Calu3 (cell line): ENCODE measurements at regions of chr20 and their contacts with region 1.

Region 1: DNA sequence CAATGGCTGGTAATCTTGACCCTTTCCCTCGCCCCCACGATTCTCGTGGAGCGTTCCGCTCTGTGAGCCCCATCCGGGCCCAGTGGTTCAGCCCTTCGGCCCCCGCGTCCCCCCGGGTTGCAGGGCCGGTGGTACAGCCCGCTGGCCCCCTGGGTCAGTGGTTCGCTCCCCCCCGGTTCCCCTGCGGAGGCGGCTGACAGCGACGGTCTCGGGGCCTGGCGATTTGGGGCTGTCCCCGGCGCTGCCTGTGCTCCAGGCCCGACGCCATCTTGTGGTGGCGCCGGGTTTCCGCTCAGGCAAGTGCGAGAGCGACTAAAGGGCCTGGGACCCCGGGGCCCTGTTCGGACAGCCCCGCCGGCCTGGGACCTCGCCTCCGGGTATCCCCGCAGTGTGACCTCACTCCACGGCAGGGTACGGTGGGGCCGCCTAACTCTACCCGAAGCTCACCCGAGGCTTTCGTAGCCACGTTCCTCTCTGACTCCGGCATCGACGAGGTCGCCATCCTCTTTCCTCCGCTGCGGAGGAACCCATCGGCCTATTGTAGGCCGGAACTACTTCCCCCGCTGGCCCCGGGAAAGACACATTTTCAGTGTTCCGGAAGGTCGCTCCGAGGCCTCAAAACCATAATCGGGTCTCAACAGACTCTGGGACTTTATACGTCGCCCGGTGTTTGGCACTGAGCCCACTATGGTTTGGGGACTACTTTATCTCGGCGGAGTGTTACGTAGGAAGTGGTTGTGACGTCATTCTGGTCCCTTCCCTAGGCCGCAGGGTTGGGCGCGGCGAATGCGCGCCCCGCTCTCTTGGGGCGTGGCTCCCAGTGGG is at the start of gene ZNF335:
- DNase-seq: peak; percentile 99
- H3K4me3 Mint-ChIP-seq: peak within 1 kb of the TSS; percentile 81
- H3K27ac Mint-ChIP-seq: peak within 1 kb of the TSS; percentile 80
- H3K4me1 Mint-ChIP-seq: peaks cover 24% of the 10 kb centered on the region
- H3K27me3 Mint-ChIP-seq: peaks cover 15% of the 10 kb centered on the region
- CTCF ChIP-seq: peak; percentile 35
- total RNA-seq, gene ZNF335: 26.4 and 31.9 TPM in 2 replicates

Region 2: GRCh38 chr20:46013826-46014516 is 42.1 kb after region 1 on chr20:
- CTCF ChIA-PET with region 1: interaction called, 12 read pairs
- intact Hi-C with region 1: no loop called
- DNase-seq: peak; percentile 87
- H3K4me3 Mint-ChIP-seq: peak overlapping the region; percentile 55
- H3K27ac Mint-ChIP-seq: no peak overlapping the region
- H3K4me1 Mint-ChIP-seq: peaks cover 31% of the 10 kb centered on the region
- H3K27me3 Mint-ChIP-seq: peaks cover 89% of the 10 kb centered on the region
- CTCF ChIP-seq: peak; percentile 92

Region 3: DNA sequence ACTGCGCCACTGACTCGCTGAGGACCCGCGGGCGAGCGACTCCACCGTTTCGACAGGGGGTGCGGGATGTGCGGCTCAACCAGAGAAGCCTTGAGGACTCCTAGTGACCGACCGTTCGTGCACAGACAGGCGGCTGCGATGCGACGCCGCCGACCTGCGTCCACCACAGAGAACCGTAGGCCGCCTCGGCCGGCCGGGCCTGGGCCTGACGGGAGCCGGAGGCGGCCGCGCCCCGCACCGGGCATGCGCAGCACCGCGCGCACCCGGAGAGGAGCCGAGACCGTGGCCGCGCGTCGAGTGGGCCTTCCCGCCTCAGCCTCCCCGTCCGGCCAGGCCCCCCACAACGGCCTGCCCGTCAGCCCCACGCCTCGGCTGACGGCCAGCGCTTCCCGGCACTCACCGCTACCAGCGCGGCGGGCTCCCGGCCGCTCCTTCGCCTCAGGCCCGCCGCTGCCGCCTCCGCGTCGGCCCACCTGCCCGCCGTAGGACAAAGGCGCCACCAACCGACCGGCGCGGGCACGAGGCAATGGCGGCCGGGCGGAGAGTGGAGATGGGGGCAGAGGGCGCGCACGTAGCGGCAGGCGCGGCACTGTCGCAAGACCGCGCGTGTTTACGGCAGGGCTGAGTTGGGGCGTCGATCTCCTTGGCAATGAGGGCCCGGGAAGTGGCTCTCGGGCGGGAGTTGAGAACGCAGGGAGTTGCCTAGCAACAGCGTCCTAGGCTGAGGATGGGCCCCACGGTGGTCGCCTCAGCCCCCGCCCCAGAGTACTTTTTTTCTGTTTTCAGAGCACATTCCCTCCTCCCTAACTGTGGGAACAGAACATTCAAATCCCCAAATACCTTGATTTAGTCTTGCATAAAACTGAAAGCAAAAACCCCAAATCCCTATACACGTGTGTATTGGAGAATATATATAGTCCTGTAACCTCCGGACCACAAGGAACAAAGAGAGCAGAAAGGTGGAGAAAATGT is 117.8 kb after region 1 on chr20 and contains the start of gene NCOA5:
- CTCF ChIA-PET with region 1: interaction called, 3 read pairs
- intact Hi-C with region 1: loop called (anchors 5 kb)
- DNase-seq: peak; percentile 99
- H3K4me3 Mint-ChIP-seq: peak within 1 kb of the TSS; percentile 68
- H3K27ac Mint-ChIP-seq: peak within 1 kb of the TSS; percentile 45
- H3K4me1 Mint-ChIP-seq: peaks cover 35% of the 10 kb centered on the region
- H3K27me3 Mint-ChIP-seq: no peaks in the 10 kb centered on the region
- CTCF ChIP-seq: peak; percentile 12
- total RNA-seq, gene NCOA5: 31.7 and 34.4 TPM in 2 replicates